Activated T-helper 2 cell treated with anti-CD3 and anti-CD28 coated beads, Interferon-gamma antibody, Interleukin-2, Interleukin-4, amounts not matched to agents 10 μg/mL and 5 μg/mL and 100 μg/mL, durations not matched to agents 14 hours and 24 hours and 36 hours (primary cell): ENCODE measurements at regions of chr6 and their contacts with region 1.

Region 1: DNA sequence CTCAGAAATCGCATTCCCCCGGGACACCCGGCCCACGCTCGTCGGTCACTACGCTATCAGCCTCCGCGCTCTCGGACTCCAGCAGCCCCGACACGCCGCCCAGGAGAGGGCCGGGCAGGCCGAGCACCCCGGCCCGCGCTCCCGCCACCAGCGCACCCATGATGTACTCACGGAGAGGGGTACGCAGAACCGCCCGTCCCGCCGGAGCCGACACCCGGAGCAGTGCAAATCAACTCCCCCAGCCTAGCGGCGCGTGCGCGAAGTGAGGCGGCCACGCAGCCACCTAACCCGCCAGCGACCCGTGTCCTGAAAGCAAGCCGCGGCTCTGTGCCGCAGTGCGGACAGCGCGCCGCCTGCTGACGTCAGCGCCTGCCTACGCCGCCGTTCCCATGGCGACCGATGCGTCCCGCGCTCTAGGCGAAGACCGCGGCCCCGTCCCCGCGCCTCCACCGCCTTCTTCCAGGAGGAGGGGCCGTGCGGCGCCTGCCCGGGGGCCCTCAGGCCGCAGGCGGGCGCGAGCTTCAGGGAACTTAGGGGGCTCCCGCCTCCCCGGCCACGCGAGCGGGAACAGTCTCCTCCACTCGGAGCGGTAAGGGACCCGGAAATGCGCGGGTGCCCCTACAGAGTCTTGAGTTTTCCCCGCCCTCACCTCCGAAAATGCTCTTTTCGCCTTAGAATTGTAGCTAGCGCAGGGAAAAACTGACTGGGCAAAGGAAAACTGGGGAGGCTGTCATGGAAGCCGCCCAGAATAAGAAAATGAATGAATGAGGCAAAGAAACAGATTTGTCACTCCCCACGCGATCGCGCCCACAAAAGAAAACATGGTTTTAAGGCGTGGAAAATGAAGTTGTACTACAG is at the start of gene AHI1:
- DNase-seq: peak; percentile 88
- H3K4me3 Mint-ChIP-seq: no peak within 1 kb of the TSS
- H3K27ac Mint-ChIP-seq: no peak within 1 kb of the TSS
- H3K4me1 Mint-ChIP-seq: peaks cover 20% of the 10 kb centered on the region
- H3K27me3 Mint-ChIP-seq: no peaks in the 10 kb centered on the region
- total RNA-seq, gene AHI1: 201 and 203 TPM in 2 replicates

Region 2: GRCh38 chr6:135451693-135452092 is 45.9 kb before region 1 on chr6:
- intact Hi-C with region 1: loop called (anchors 5 kb)
- DNase-seq: no peak
- H3K4me3 Mint-ChIP-seq: no peak overlapping the region
- H3K27ac Mint-ChIP-seq: no peak overlapping the region
- H3K4me1 Mint-ChIP-seq: peaks cover 7% of the 10 kb centered on the region
- H3K27me3 Mint-ChIP-seq: no peaks in the 10 kb centered on the region

Region 3: GRCh38 chr6:135586841-135587240 is 89.2 kb after region 1 on chr6:
- intact Hi-C with region 1: loop called (anchors 5 kb)
- DNase-seq: peak; percentile 55
- H3K4me3 Mint-ChIP-seq: no peak overlapping the region
- H3K27ac Mint-ChIP-seq: peak overlapping the region; percentile 95
- H3K4me1 Mint-ChIP-seq: peaks cover 75% of the 10 kb centered on the region
- H3K27me3 Mint-ChIP-seq: no peaks in the 10 kb centered on the region

Region 4: GRCh38 chr6:136226027-136226673 is 728.5 kb after region 1 on chr6:
- intact Hi-C with region 1: loop called (anchors 5 kb)
- DNase-seq: peak; percentile 38
- H3K4me3 Mint-ChIP-seq: no peak overlapping the region
- H3K27ac Mint-ChIP-seq: no peak overlapping the region
- H3K4me1 Mint-ChIP-seq: peaks cover 30% of the 10 kb centered on the region
- H3K27me3 Mint-ChIP-seq: no peaks in the 10 kb centered on the region

Region 5: GRCh38 chr6:136249811-136250685 is 752.4 kb after region 1 on chr6 and contains the start of gene MTFR2:
- intact Hi-C with region 1: loop called (anchors 10 kb)
- DNase-seq: peak; percentile 95
- H3K4me3 Mint-ChIP-seq: peak within 1 kb of the TSS; percentile 94
- H3K27ac Mint-ChIP-seq: peak within 1 kb of the TSS; percentile 91
- H3K4me1 Mint-ChIP-seq: peaks cover 51% of the 10 kb centered on the region
- H3K27me3 Mint-ChIP-seq: no peaks in the 10 kb centered on the region
- total RNA-seq, gene MTFR2: 18.4 and 20.8 TPM in 2 replicates

Region 6: GRCh38 chr6:136289579-136290409 is 792.2 kb after region 1 on chr6 and contains the start of gene BCLAF1:
- intact Hi-C with region 1: loop called (anchors 1 kb)
- DNase-seq: peak; percentile 100
- H3K4me3 Mint-ChIP-seq: peak within 1 kb of the TSS; percentile 100
- H3K27ac Mint-ChIP-seq: peak within 1 kb of the TSS; percentile 100
- H3K4me1 Mint-ChIP-seq: peaks cover 32% of the 10 kb centered on the region
- H3K27me3 Mint-ChIP-seq: no peaks in the 10 kb centered on the region
- total RNA-seq, gene BCLAF1: 228 and 242 TPM in 2 replicates